SK-N-SH (cell line): ENCODE measurements at regions of chr7 and their contacts with region 1.

Region 1: GRCh38 chr7:37916673-37917660 is at the start of gene SFRP4:
- DNase-seq: peak; percentile 77
- H3K4me3 ChIP-seq: peak within 1 kb of the TSS; percentile 51 to 54
- H3K27ac ChIP-seq: no peak within 1 kb of the TSS
- H3K4me1 ChIP-seq: peaks cover 0 to 26% of the 10 kb centered on the region in 2 experiments; a peak in 2 of 4 replicates
- H3K27me3 ChIP-seq: peaks cover 39% of the 10 kb centered on the region; the same call in 1 of the 2 replicates
- CTCF ChIP-seq: peak; percentile 82
- EP300 ChIP-seq: no peak
- RAD21 ChIP-seq: peak; percentile 69
- polyA plus RNA-seq, gene SFRP4: 0.03 TPM in 1 of 2 replicates, not detected in the other

Region 2: GRCh38 chr7:37853474-37853873 is 63.5 kb before region 1 on chr7:
- CTCF ChIA-PET with region 1: interaction called, 11 read pairs
- POLR2A ChIA-PET with region 1: no interaction called
- DNase-seq: peak; percentile 32
- H3K4me3 ChIP-seq: no peak overlapping the region; a peak in 1 of 4 replicates
- H3K27ac ChIP-seq: no peak overlapping the region
- H3K4me1 ChIP-seq: no peaks in the 10 kb centered on the region
- H3K27me3 ChIP-seq: no peaks in the 10 kb centered on the region
- CTCF ChIP-seq: peak; percentile 51
- EP300 ChIP-seq: no peak
- RAD21 ChIP-seq: peak; percentile 64

Region 3: DNA sequence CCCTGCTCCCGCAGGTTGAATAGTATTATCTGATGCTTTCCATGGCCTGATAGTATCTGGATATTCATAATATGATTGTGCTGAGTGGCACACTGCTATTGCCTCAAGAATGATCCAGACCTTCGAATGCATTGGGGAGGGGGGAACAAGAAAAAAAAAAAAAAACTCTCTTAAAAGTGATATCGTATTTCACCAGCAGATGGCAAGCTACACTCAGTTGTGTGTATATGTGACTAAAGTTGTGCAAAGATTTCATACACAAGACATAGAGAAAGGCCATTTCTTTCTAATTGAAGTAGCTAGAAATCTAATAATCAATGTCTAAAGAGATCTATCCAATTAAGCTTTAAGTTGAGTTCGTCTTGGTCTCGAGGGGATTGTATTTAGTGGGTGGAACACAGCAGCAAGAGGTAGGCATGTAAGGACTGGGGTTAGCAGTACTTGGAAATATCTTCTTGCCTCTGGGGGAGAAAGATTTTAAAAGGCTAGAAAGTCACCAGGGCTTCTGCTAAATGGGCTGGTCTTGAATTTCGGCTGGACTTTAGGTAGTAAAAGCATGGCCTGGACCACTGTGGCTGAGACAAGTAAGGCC is 15.6 kb before region 1 on chr7:
- CTCF ChIA-PET with region 1: interaction called, 280 read pairs
- POLR2A ChIA-PET with region 1: no interaction called
- DNase-seq: peak; percentile 47
- H3K4me3 ChIP-seq: peak overlapping the region in 1 of 2 experiments; percentile 4; a peak in 1 of 4 replicates
- H3K27ac ChIP-seq: no peak overlapping the region
- H3K4me1 ChIP-seq: peaks cover 0 to 8% of the 10 kb centered on the region in 2 experiments; a peak in 3 of 4 replicates
- H3K27me3 ChIP-seq: no peaks in the 10 kb centered on the region
- CTCF ChIP-seq: peak; percentile 83
- EP300 ChIP-seq: no peak
- RAD21 ChIP-seq: peak; percentile 85

Region 4: DNA sequence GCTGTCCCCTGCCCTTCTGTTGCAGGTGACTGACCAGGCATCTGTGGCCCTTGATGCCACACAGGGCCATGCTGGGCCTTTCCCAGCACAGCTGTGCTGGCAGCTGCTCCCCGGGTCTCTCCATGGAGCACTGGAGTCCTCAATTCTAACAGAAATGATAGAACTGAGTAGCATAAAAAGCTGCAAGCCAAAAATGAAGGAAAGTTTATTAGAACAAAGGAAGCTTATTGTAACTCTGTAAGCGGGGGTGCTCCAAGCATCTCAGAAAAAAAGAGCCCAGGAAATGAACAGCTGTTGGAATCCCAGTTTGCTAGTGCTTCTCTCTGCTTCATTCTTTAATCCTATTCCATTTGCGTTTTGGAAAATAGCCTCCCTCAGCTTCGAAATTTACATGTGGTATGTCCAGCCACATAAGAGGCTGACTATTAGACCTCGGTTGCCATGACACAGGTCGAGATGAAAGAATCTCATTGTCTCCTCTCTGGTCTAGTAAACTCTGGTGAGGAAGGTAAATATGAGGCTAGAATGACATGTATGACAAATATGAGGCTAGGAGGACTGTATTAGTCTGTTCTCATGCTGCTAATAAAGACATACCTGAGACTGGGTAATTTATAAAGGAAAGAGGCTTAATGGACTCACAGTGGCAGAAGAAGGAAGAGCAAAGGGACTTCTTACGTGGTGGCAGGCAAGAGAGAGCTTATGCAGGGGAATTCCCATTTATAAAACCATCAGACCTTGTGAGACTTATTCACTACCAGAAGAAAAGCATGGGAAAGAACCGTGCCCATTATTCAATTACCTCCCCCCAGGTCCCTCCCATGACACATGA is 27.2 kb after region 1 on chr7:
- CTCF ChIA-PET with region 1: interaction called, 10 read pairs
- POLR2A ChIA-PET with region 1: no interaction called
- DNase-seq: no peak
- H3K4me3 ChIP-seq: no peak overlapping the region
- H3K27ac ChIP-seq: no peak overlapping the region
- H3K4me1 ChIP-seq: peaks cover 0 to 4% of the 10 kb centered on the region in 2 experiments; a peak in 2 of 4 replicates
- H3K27me3 ChIP-seq: no peaks in the 10 kb centered on the region
- CTCF ChIP-seq: no peak
- EP300 ChIP-seq: no peak
- RAD21 ChIP-seq: no peak

Region 5: GRCh38 chr7:38070718-38071117 is 153.8 kb after region 1 on chr7:
- CTCF ChIA-PET with region 1: interaction called, 21 read pairs
- POLR2A ChIA-PET with region 1: no interaction called
- DNase-seq: peak; percentile 73
- H3K4me3 ChIP-seq: no peak overlapping the region
- H3K27ac ChIP-seq: peak overlapping the region in 1 of 2 experiments; percentile 69; a peak in 2 of 4 replicates
- H3K4me1 ChIP-seq: no peaks in the 10 kb centered on the region; a peak in 1 of 4 replicates
- H3K27me3 ChIP-seq: no peaks in the 10 kb centered on the region
- CTCF ChIP-seq: peak; percentile 69
- EP300 ChIP-seq: peak in 1 of 2 experiments; percentile 72; a peak in 2 of 4 replicates
- RAD21 ChIP-seq: peak; percentile 54